ENCODE measurements at regions of chr7 and their contacts with region 1.

Region 1: GRCh38 chr7:101856473-101857357 is 39.3 kb downstream of the CUX1 start:
- DNase-seq: peak; percentile 86
- H3K4me3 ChIP-seq: peak overlapping the region; percentile 1 to 23 (median 20)
- H3K27ac ChIP-seq: peak overlapping the region; percentile 62
- H3K4me1 ChIP-seq: peaks cover 23% of the 10 kb centered on the region
- H3K27me3 ChIP-seq: no peaks in the 10 kb centered on the region
- CTCF ChIP-seq: peak; percentile 33 to 35
- POLR2A ChIP-seq: peak; percentile 40

Region 2: GRCh38 chr7:101838837-101839483 is 17.8 kb before region 1 on chr7:
- CTCF ChIA-PET with region 1: interaction called, 14 read pairs
- POLR2A ChIA-PET with region 1: no interaction called
- dilution Hi-C with region 1: no loop called
- intact Hi-C with region 1: no loop called
- DNase-seq: no peak
- H3K4me3 ChIP-seq: no peak overlapping the region
- H3K27ac ChIP-seq: no peak overlapping the region
- H3K4me1 ChIP-seq: no peaks in the 10 kb centered on the region
- H3K27me3 ChIP-seq: no peaks in the 10 kb centered on the region
- CTCF ChIP-seq: no peak
- POLR2A ChIP-seq: no peak

Region 3: DNA sequence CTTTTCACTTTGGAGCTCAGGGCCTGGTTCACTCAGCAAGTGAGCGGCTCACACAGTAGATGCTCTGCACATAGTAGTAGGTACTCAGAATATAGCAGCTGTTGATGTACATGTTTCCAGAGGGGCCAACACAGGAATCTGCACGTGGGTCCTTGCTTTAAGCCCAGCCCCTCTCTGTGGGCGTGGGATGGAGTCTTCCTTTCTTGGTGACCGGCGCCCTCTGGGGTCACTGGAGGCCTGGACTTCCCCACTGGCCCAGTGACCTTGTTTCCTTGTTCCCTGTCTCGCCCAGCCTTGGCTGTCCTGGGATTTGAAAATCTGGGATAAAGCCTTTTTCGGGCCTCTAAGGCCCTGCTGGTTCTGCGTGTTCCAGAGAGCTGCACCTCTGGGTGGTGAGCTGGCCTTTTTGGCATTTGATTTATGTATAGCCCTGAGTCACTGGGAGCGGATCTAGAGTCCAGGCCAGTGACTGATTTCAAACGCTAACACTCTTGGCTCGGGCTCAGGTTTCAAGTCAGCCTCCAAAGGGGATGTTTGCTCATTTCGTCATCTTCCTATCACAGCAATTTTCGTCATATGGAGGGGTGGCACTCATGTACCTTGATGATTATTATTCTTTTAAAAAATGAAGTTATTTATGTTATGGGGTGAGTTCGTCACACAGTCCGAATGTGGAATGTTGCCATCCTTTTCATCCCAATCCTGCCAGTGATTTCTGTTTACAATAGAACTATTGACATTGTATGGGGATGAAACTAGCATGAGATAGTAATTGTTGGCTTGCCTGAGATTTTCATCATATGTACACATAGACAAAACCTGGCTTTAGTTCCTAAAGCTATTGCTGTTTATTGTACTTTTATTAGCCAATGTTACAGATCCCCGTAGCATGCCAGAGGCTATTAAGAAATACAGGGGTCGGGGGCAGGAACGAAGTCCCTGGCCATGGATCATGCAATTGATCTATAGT is 26.2 kb after region 1 on chr7:
- CTCF ChIA-PET with region 1: interaction called, 30 read pairs
- POLR2A ChIA-PET with region 1: no interaction called
- dilution Hi-C with region 1: no loop called
- intact Hi-C with region 1: loop called (anchors 2 kb)
- DNase-seq: peak; percentile 98
- H3K4me3 ChIP-seq: peak overlapping the region in 1 of 3 experiments; percentile 1
- H3K27ac ChIP-seq: peak overlapping the region; percentile 93
- H3K4me1 ChIP-seq: peaks cover 35% of the 10 kb centered on the region
- H3K27me3 ChIP-seq: no peaks in the 10 kb centered on the region
- CTCF ChIP-seq: no peak
- POLR2A ChIP-seq: no peak

Region 4: GRCh38 chr7:101953248-101953819 is 96.6 kb after region 1 on chr7:
- CTCF ChIA-PET with region 1: interaction called, 4 read pairs
- POLR2A ChIA-PET with region 1: no interaction called
- dilution Hi-C with region 1: no loop called
- intact Hi-C with region 1: loop called (anchors 1 kb)
- DNase-seq: no peak
- H3K4me3 ChIP-seq: peak overlapping the region in 1 of 3 experiments; percentile 43
- H3K27ac ChIP-seq: peak overlapping the region; percentile 88
- H3K4me1 ChIP-seq: peaks cover 28% of the 10 kb centered on the region
- H3K27me3 ChIP-seq: no peaks in the 10 kb centered on the region
- CTCF ChIP-seq: no peak
- POLR2A ChIP-seq: no peak

Region 5: GRCh38 chr7:102111061-102111743 is 254.5 kb after region 1 on chr7:
- CTCF ChIA-PET with region 1: no interaction called
- POLR2A ChIA-PET with region 1: no interaction called
- dilution Hi-C with region 1: no loop called
- intact Hi-C with region 1: no loop called
- DNase-seq: no peak
- H3K4me3 ChIP-seq: no peak overlapping the region
- H3K27ac ChIP-seq: no peak overlapping the region
- H3K4me1 ChIP-seq: no peaks in the 10 kb centered on the region
- H3K27me3 ChIP-seq: no peaks in the 10 kb centered on the region
- CTCF ChIP-seq: no peak
- POLR2A ChIP-seq: no peak